A549 (cell line): ENCODE measurements at regions of chr2 and their contacts with region 1.

Region 1: GRCh38 chr2:96265840-96266679 is at the starts of genes CIAO1 and TMEM127:
- DNase-seq: peak; percentile 90 to 98
- ATAC-seq: peak; percentile 93 to 97
- H3K4me3 ChIP-seq: peak within 1 kb of the TSS; percentile 97
- H3K27ac ChIP-seq: peak within 1 kb of the TSS; percentile 92 to 94
- H3K4me1 ChIP-seq: peaks cover 25% of the 10 kb centered on the region
- CTCF ChIP-seq: no peak
- EP300 ChIP-seq: no peak
- POLR2A ChIP-seq: peak; percentile 75
- RAD21 ChIP-seq: no peak
- polyA plus RNA-seq, gene CIAO1: 99.7 and 123 TPM in 2 replicates
- polyA plus RNA-seq, gene TMEM127: 38.7 and 45.3 TPM in 2 replicates

Region 2: DNA sequence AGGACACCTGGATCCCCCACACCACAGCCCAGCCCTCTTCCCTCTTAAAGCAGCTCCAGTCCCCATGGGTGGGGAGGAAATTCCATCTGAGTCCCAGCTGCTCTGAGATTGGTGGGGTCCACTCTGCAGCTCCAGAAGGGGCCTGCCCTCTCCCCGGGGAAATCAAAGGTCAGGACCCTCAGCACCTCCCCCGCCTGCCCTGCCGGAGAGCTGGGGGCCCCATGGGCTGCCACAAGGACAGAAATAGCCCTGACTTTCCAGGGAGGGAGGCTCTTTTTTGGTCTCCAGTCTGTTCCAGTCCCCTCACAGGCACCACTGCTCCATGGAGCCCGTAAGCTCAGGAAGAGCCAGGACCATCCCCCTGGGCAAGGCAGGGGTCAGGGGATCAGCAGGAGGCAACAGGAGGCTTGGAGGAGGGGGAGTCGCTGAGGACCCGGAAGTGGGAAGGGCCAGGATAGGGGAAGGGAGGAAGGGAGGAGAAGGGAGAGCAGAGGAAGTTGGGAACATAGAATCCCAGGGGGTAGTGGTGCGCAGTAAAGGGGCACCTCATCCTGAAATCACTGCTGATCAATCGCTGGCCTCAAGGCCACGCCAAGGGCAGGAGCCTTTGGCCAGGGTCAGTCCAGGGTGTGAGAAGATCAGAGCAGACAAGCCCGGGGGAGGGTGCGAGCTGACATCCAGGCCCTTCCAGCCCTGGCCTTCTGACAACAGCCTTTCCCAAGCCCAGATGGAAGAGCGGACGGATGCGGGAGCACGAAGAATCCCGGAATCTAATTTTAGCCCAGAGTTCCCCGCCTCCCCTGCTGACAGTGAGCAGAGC is 157.3 kb before region 1 on chr2:
- CTCF ChIA-PET with region 1: no interaction called
- POLR2A ChIA-PET with region 1: no interaction called
- DNase-seq: no peak
- ATAC-seq: no peak
- H3K4me3 ChIP-seq: no peak overlapping the region
- H3K27ac ChIP-seq: no peak overlapping the region
- H3K4me1 ChIP-seq: no peaks in the 10 kb centered on the region
- CTCF ChIP-seq: no peak
- EP300 ChIP-seq: no peak
- POLR2A ChIP-seq: no peak
- RAD21 ChIP-seq: no peak

Region 3: DNA sequence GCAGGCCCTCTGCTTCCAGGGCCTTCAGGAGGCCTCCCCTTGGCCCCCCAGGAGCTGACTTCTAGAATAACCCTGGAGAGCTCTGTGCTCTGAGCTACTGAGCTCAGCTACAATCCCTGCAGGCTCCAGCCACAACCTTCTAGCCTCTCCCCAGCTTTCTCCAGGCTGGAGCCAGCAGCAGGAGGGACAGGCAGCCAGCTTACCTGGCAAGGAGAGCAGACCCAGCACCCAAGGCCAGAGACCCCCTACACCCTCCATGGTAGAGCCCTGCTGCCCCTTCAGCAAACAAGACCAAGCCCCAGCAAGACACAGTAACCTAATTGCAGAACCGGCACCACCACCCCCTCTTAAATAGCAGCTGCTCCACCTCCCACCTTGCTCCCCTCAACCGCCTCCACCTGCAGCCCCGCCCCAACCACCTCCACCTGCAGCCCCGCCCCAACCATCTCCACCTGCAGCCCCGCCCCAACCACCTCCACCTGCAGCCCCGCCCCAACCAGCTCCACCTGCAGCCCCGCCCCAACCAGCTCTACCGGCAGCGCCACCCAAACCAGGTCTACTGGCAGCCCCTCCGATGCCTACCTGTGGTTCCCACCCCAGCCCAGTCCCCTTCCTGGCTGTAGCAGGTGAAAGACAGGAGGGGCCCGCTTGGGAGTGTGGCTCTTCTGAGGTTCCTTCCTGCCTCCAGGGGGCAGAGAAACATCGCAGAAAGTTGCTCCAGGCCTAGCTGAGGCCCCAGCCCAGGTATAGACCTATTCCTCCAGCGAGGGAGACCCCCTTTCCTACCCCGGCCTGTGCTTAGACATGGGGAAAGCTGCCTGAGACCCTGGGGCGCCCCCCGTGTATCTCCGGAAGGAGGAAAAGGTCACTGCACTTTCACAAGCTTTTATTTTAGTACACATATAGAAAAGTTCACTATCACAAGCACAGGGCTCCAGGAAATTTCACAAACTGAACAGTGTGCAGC is 127.6 kb before region 1 on chr2 and contains the start of gene ASTL:
- CTCF ChIA-PET with region 1: interaction called, 17 read pairs
- POLR2A ChIA-PET with region 1: no interaction called
- DNase-seq: peak; percentile 31 to 39
- ATAC-seq: peak; percentile 64 to 86; a peak in 4 of 6 replicates
- H3K4me3 ChIP-seq: no peak within 1 kb of the TSS
- H3K27ac ChIP-seq: no peak within 1 kb of the TSS
- H3K4me1 ChIP-seq: no peaks in the 10 kb centered on the region
- CTCF ChIP-seq: peak; percentile 48; the same call in 2 of the 3 replicates
- EP300 ChIP-seq: no peak
- POLR2A ChIP-seq: no peak
- RAD21 ChIP-seq: peak; percentile 65 to 76
- polyA plus RNA-seq, gene ASTL: not detected in 2 replicates

Region 4: GRCh38 chr2:96241005-96241626 is 24.9 kb before region 1 on chr2:
- CTCF ChIA-PET with region 1: interaction called, 13 read pairs
- POLR2A ChIA-PET with region 1: no interaction called
- DNase-seq: no peak
- ATAC-seq: peak in 1 of 2 experiments; percentile 25; a peak in 2 of 6 replicates
- H3K4me3 ChIP-seq: no peak overlapping the region
- H3K27ac ChIP-seq: no peak overlapping the region
- H3K4me1 ChIP-seq: no peaks in the 10 kb centered on the region
- CTCF ChIP-seq: no peak
- EP300 ChIP-seq: no peak
- POLR2A ChIP-seq: no peak
- RAD21 ChIP-seq: no peak

Region 5: DNA sequence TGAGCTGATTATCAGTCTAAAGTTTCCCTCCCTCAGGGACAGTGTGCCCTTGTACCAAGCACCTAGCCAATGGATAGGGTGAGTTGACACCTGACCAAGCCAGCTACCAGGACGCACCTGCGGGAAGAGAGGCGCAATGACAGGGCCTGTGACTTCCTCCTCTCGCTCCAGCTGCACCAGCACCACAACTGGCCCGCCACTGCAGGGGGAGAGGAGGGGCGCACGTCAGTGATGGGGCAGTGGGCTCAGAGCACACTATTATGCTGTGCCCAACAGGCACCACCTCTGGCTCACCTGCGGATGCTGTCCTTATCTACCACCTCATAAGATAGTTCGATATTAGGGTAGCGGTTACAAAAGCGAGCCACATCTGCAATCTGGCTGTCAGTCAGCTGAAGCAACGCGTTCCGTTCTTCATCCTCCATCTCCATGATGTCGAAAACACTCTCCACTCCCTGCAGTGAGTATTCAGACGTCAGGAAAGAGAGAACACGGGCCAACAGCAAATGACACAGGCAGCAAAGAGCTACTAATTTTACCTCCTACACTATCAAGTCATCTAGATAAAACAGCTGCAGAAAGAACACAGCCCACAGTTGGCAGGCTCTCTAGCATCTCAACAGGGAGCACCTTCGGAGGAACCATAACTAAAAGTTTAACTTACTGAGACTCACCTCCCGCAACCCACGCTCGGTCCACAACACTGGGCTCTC is 10.9 kb after region 1 on chr2:
- CTCF ChIA-PET with region 1: interaction called, 10 read pairs
- POLR2A ChIA-PET with region 1: no interaction called
- DNase-seq: no peak
- ATAC-seq: no peak
- H3K4me3 ChIP-seq: no peak overlapping the region
- H3K27ac ChIP-seq: no peak overlapping the region
- H3K4me1 ChIP-seq: no peaks in the 10 kb centered on the region
- CTCF ChIP-seq: no peak
- EP300 ChIP-seq: no peak
- POLR2A ChIP-seq: no peak
- RAD21 ChIP-seq: no peak

Region 6: DNA sequence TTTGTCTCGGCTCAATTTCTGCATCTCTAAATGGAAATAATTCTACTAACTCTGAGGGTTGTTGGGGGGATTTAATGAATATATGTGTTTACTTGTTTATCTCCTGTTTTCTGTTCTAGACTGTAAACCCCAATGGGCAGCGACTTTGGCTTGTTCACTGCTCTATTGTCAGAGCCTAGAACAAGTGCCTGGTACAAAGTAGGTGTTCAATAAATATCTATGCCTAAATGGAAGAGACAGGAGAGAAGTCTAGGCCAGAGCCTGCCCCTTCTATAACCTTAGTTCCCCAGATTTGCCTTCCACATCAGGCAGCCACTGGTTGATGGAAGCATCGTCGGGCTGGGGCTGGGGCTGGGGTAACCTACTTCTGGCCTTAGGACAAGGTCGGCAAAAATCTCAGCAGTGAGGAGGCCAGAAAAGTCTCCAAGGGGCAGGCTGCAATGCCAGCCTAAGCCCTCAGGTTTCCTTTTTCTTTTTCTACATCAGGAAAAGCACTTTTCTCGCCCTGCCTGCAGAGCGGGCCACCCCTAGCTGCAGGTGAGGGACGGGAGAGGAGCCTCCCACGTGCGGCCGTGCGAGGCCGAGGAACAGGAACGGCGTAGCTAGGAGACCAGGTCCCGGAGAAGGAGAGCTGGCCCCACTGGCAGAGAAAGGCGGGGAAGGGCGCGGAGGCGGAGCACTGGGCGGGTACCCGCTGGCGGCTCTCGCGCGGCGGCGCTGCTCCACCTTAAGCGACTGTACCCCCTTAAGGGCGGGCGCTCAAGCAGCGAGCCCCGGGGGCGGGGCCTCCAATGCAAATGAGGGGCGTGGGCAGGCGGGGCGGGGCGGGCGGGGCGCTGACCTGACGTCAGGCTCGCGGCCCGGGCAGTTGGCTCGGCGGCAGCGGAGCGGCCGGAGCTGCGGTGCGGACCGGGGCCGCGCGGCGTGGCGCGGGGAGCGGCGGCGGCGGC is 494.3 kb after region 1 on chr2 and contains the start of gene CNNM4:
- CTCF ChIA-PET with region 1: no interaction called
- POLR2A ChIA-PET with region 1: no interaction called
- DNase-seq: peak; percentile 86 to 93
- ATAC-seq: peak; percentile 93 to 95
- H3K4me3 ChIP-seq: peak within 1 kb of the TSS; percentile 55
- H3K27ac ChIP-seq: peak within 1 kb of the TSS; percentile 80 to 93
- H3K4me1 ChIP-seq: peaks cover 38% of the 10 kb centered on the region
- CTCF ChIP-seq: no peak
- EP300 ChIP-seq: no peak
- POLR2A ChIP-seq: peak; percentile 92
- RAD21 ChIP-seq: no peak; a peak in 1 of 5 replicates
- polyA plus RNA-seq, gene CNNM4: 11.2 and 15.0 TPM in 2 replicates